ENCODE measurements at regions of chr7 and their contacts with region 1.

Region 1: GRCh38 chr7:106285051-106285854 is 470 bp upstream of the NAMPT start:
- DNase-seq: peak; percentile 99 to 100
- H3K4me3 ChIP-seq: peak overlapping the region; percentile 81 to 88
- H3K27ac ChIP-seq: peak overlapping the region; percentile 93 to 99
- H3K4me1 ChIP-seq: peaks cover 0 to 38% (median 14%) of the 10 kb centered on the region in 4 donors
- H3K27me3 ChIP-seq: no peaks in the 10 kb centered on the region
- CTCF ChIP-seq: no peak

Region 2: GRCh38 chr7:106166655-106167342 is 118.5 kb before region 1 on chr7:
- intact Hi-C with region 1: no loop called
- DNase-seq: no peak
- H3K4me3 ChIP-seq: no peak overlapping the region
- H3K27ac ChIP-seq: peak overlapping the region; percentile 51 to 68
- H3K4me1 ChIP-seq: peaks cover 0 to 58% (median 25%) of the 10 kb centered on the region in 4 donors
- H3K27me3 ChIP-seq: no peaks in the 10 kb centered on the region
- CTCF ChIP-seq: peak; percentile 61 to 65

Region 3: DNA sequence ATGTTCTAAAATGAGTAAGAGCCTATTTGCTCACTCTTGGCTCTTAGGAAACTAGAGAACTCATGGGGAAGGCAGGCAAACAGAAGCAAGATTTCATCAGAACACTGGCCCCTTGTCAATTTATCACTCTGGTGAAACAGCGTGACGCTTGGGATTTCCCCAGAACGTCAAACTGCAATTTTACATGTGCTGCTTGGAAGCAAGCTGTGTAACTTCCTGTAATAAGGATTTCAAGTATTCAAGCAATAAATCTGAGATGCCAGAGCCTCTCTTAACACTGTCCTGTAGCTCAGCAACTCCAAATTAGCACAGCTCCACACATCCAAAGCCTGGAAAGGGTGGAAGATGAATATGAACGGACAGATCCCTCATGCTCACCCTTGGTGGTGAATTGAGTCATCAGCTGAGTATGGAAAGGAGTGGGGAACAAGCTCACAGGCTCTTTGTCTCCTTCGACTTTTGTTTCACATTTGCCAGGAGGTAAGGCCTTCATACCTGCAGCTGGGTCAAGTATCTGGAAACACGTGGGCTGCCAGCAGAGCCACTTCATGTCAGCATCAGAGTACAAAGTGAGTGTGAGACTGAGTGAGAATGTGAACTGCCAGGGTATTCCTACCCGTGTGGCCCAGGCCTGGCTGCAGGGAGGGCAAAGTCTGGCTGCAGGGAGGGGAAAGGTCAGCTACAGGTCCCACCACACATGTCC is 139.9 kb after region 1 on chr7:
- intact Hi-C with region 1: loop called (anchors 10 kb)
- DNase-seq: peak; percentile 90 to 95
- H3K4me3 ChIP-seq: no peak overlapping the region
- H3K27ac ChIP-seq: peak overlapping the region; percentile 69 to 71
- H3K4me1 ChIP-seq: peaks cover 0 to 38% (median 30%) of the 10 kb centered on the region in 4 donors
- H3K27me3 ChIP-seq: no peaks in the 10 kb centered on the region
- CTCF ChIP-seq: no peak

Measured in tibial artery (tissue), 4 donors.